Activated CD8-positive, alpha-beta memory T cell treated with anti-CD3 and anti-CD28 coated beads, Interleukin-2, amount 10 ng/mL, durations not matched to agents 7 days and 5 days (primary cell): ENCODE measurements at regions of chr3 and their contacts with region 1.

Region 1: GRCh38 chr3:129316131-129317013 is 37.7 kb downstream of the HMCES start:
- DNase-seq: peak; percentile 90
- ATAC-seq: peak; percentile 55
- H3K4me3 Mint-ChIP-seq: peak overlapping the region; percentile 88
- H3K27ac Mint-ChIP-seq: peak overlapping the region; percentile 73
- H3K4me1 Mint-ChIP-seq: peaks cover 31% of the 10 kb centered on the region
- H3K27me3 Mint-ChIP-seq: no peaks in the 10 kb centered on the region

Region 2: DNA sequence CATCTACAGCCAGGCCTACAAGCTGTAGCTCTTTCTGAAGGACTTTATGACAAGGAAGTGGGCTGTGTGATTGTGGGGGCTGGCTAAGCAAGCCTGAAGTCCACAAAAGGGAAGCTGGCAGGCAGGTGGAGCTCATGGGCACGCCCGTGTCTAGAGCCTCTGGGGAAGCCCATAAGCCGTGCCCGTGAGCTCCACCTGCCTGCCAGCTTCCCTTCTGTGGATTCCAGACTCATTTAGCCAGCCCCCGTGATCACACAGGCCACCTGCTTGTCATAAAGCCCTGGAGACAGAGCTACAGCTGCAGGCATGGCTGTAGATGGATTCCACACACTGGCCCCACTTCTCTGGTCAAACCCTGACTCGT is 300.0 kb before region 1 on chr3:
- CTCF ChIA-PET with region 1: interaction called, 10 read pairs
- DNase-seq: peak; percentile 86
- ATAC-seq: peak; percentile 84
- H3K4me3 Mint-ChIP-seq: peak overlapping the region; percentile 66
- H3K27ac Mint-ChIP-seq: peak overlapping the region; percentile 95
- H3K4me1 Mint-ChIP-seq: peaks cover 38% of the 10 kb centered on the region
- H3K27me3 Mint-ChIP-seq: no peaks in the 10 kb centered on the region

Region 3: DNA sequence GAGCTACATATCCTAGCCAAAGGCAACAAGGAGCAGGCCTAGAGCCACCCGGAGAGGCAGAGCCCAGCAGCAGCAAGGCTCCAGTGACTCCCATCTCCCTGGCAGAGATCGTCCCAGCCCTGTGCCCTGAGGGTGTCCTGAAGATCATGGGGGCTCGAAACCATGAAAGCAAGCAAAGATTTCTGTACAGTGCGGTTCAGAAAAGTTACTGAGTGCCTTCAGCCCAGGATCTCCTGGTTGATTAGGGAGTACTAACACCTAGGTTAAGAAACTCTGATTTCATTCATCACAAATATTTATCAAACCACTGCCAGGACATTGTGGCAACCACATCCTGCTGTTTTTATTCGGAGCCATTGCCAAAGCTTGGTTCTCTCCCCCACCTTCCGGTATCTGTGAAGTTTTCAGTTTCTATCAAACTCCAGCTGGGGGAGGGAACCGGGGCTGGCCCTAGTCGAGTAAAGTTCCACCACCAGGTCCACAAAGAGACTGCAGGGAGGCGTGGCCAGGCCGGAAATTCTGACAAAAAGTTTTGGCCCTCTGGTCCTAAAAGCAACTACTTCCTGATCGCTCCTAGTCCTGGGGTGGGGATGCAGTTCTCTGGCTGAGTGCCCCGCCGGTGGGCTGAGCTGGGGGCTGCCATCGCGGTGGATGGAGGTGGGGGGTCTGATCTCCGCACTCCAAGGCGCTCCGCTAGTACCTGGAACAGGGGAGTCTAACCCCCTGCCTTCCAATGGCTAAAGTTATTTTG is 195.9 kb before region 1 on chr3:
- CTCF ChIA-PET with region 1: interaction called, 13 read pairs
- DNase-seq: peak; percentile 98
- ATAC-seq: peak; percentile 69
- H3K4me3 Mint-ChIP-seq: peak overlapping the region; percentile 88
- H3K27ac Mint-ChIP-seq: peak overlapping the region; percentile 97
- H3K4me1 Mint-ChIP-seq: peaks cover 61% of the 10 kb centered on the region
- H3K27me3 Mint-ChIP-seq: no peaks in the 10 kb centered on the region

Region 4: GRCh38 chr3:129278439-129278970 is 37.9 kb before region 1 on chr3 and contains the start of gene HMCES:
- CTCF ChIA-PET with region 1: interaction called, 21 read pairs
- DNase-seq: peak; percentile 93
- ATAC-seq: peak; percentile 93
- H3K4me3 Mint-ChIP-seq: peak within 1 kb of the TSS; percentile 98
- H3K27ac Mint-ChIP-seq: peak within 1 kb of the TSS; percentile 96
- H3K4me1 Mint-ChIP-seq: peaks cover 52% of the 10 kb centered on the region
- H3K27me3 Mint-ChIP-seq: no peaks in the 10 kb centered on the region
- total RNA-seq, gene HMCES: 43.4 to 52.1 TPM

Region 5: DNA sequence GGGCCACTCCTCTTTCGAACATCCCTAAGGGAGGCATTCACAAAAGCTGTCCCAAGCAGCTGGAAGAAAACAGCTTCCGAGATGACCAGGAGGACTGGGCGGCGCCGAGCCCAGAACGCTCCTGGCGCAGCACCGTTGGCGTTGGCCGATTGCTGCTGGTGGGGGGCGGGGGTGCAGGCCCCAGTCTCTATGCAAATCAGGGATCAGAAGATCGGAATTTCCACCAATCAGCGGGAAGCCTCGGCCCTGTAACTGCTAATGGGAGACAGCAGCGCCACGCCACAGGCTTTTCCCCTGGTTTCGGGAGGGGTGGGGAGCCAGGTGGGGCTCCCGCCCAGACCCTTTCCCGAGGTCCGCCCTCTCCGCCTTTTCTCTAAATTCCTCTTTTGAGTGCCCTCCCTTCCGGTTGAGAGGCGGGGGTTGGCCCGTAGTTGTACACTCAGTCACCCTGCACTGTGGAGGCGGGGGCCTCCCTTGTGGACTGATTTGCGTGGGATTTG is 10.7 kb before region 1 on chr3:
- CTCF ChIA-PET with region 1: interaction called, 25 read pairs
- DNase-seq: no peak
- ATAC-seq: no peak
- H3K4me3 Mint-ChIP-seq: no peak overlapping the region
- H3K27ac Mint-ChIP-seq: no peak overlapping the region
- H3K4me1 Mint-ChIP-seq: peaks cover 28% of the 10 kb centered on the region
- H3K27me3 Mint-ChIP-seq: no peaks in the 10 kb centered on the region

Region 6: DNA sequence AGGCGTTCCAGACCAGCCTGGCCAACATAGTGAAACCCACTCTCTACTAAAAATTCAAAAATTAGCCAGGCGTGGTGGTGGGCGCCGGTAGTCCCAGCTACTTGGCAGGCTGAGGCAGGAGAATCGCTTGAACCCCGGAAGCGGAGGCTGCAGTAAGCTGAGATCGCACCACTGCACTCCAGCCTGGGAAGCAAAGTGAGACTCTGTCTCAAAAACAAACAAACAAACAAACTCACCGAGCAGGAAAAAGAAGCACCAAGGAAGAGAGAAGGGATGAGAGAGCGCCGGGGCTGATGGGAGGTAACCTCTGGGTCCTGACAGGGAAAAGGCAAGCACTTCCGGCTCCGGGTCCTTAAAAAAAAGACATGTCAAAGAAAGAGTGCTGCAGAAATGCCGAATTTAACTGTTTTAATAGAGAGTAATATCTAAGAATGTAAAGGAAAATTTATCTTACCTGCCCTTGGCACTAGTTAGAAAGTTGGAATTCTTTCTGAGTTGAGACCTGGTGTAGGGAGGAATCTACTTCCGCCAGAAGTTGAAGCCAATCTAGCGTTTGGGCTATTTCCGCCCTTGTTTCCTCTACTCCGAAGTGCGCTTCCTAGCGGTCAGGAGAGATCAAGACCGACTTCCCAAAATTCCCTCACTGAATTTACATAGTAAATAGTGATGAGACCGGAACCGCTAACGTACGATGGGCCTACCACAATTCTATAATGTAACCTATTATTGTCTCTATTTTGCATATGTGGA is 82.9 kb after region 1 on chr3:
- CTCF ChIA-PET with region 1: interaction called, 11 read pairs
- DNase-seq: peak; percentile 84
- ATAC-seq: peak; percentile 86
- H3K4me3 Mint-ChIP-seq: peak overlapping the region; percentile 98
- H3K27ac Mint-ChIP-seq: peak overlapping the region; percentile 97
- H3K4me1 Mint-ChIP-seq: peaks cover 37% of the 10 kb centered on the region
- H3K27me3 Mint-ChIP-seq: no peaks in the 10 kb centered on the region